Activated CD4-positive, alpha-beta T cell treated with anti-CD3 and anti-CD28 coated beads for 36 hours (primary cell): ENCODE measurements at regions of chr1 and their contacts with region 1.

Region 1: GRCh38 chr1:54400329-54400728 is 5.9 kb downstream of the SSBP3 start:
- DNase-seq: peak; percentile 67
- ATAC-seq: peak; percentile 70
- H3K4me3 Mint-ChIP-seq: peak overlapping the region; percentile 15
- H3K27ac Mint-ChIP-seq: peak overlapping the region; percentile 64
- H3K4me1 Mint-ChIP-seq: peaks cover 71% of the 10 kb centered on the region
- H3K27me3 Mint-ChIP-seq: no peaks in the 10 kb centered on the region

Region 2: DNA sequence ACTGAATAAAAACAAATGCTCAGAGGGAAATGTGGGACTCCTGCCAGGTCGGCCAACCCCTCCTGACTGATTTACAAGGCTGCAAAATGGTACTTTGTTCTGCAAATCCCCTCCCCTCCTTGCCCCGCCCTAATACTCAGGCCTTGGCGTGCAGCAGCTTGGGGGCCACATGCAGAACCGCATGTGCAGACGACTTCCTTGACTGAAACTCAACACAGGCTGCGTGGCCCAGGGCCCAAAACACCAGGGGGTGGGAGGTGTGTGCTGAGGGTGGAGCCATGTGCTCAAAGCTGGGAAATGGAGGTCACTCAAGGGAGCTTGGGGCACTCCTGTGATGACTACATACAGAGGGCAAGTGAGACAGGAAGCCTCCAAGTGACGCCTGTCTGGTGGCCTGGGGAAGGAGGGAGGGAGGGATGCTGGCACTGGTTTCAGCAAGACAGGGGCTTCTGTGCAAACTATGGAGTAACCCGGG is 113.1 kb before region 1 on chr1:
- CTCF ChIA-PET with region 1: interaction called, 4 read pairs
- POLR2A ChIA-PET with region 1: interaction called, 3 read pairs
- intact Hi-C with region 1: loop called (anchors 1 to 5 kb)
- DNase-seq: peak; percentile 90
- ATAC-seq: peak; percentile 88
- H3K4me3 Mint-ChIP-seq: peak overlapping the region; percentile 59
- H3K27ac Mint-ChIP-seq: peak overlapping the region; percentile 97
- H3K4me1 Mint-ChIP-seq: peaks cover 94% of the 10 kb centered on the region
- H3K27me3 Mint-ChIP-seq: no peaks in the 10 kb centered on the region

Region 3: GRCh38 chr1:54376430-54377039 is 23.8 kb before region 1 on chr1:
- CTCF ChIA-PET with region 1: interaction called, 4 read pairs
- POLR2A ChIA-PET with region 1: interaction called, 3 read pairs
- intact Hi-C with region 1: loop called (anchors 1 to 5 kb)
- DNase-seq: peak; percentile 62
- ATAC-seq: peak; percentile 77
- H3K4me3 Mint-ChIP-seq: no peak overlapping the region
- H3K27ac Mint-ChIP-seq: peak overlapping the region; percentile 56
- H3K4me1 Mint-ChIP-seq: peaks cover 87% of the 10 kb centered on the region
- H3K27me3 Mint-ChIP-seq: no peaks in the 10 kb centered on the region